Caco-2 (cell line): ENCODE measurements at regions of chr6 and their contacts with region 1.

Region 1: GRCh38 chr6:112443179-112444065 is 96.3 kb downstream of the RFPL4B start:
- DNase-seq: no peak
- H3K4me3 ChIP-seq: no peak overlapping the region
- H3K4me3 Mint-ChIP-seq: no peak overlapping the region
- H3K27ac Mint-ChIP-seq: no peak overlapping the region
- H3K4me1 ChIP-seq: peaks cover 22% of the 10 kb centered on the region
- H3K4me1 Mint-ChIP-seq: peaks cover 7% of the 10 kb centered on the region
- H3K27me3 ChIP-seq: no peaks in the 10 kb centered on the region
- H3K27me3 Mint-ChIP-seq: no peaks in the 10 kb centered on the region
- CTCF ChIP-seq: no peak

Region 2: DNA sequence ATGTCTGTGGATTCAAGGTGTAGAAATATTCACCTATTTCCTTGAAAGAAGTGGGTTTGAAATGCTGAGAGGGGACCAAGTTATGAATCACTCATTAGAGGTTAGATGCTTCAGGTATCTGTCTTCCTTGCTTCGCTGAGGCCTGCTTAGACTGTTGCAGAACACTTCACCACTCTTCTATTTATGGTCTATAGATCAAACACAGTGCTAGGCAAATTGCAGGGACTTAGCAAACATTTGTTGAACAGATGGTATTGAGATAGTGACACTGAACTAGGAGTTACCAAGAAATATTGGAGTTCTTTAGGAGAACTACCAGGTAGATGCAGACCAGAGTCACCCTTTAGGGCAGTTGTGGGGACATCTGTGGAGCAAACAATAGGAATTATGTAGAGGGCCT is 27.5 kb after region 1 on chr6:
- CTCF ChIA-PET with region 1: no interaction called
- POLR2A ChIA-PET with region 1: no interaction called
- intact Hi-C with region 1: loop called (anchors 1 kb)
- DNase-seq: peak in 1 of 2 experiments; percentile 8
- H3K4me3 ChIP-seq: no peak overlapping the region
- H3K4me3 Mint-ChIP-seq: no peak overlapping the region
- H3K27ac Mint-ChIP-seq: peak overlapping the region; percentile 3
- H3K4me1 ChIP-seq: peaks cover 44% of the 10 kb centered on the region
- H3K4me1 Mint-ChIP-seq: peaks cover 20% of the 10 kb centered on the region
- H3K27me3 ChIP-seq: no peaks in the 10 kb centered on the region
- H3K27me3 Mint-ChIP-seq: no peaks in the 10 kb centered on the region
- CTCF ChIP-seq: no peak